ENCODE measurements at regions of chr1 and their contacts with region 1.

Region 1: GRCh38 chr1:20240012-20240411 is 50.7 kb upstream of the VWA5B1 start:
- DNase-seq: no peak
- H3K27ac ChIP-seq: no peak overlapping the region
- CTCF ChIP-seq: no peak

Region 2: GRCh38 chr1:20151906-20152598 is 88.0 kb before region 1 on chr1:
- CTCF ChIA-PET with region 1: no interaction called
- POLR2A ChIA-PET with region 1: no interaction called
- DNase-seq: peak; percentile 82
- H3K27ac ChIP-seq: no peak overlapping the region
- CTCF ChIP-seq: peak; percentile 88

Region 3: DNA sequence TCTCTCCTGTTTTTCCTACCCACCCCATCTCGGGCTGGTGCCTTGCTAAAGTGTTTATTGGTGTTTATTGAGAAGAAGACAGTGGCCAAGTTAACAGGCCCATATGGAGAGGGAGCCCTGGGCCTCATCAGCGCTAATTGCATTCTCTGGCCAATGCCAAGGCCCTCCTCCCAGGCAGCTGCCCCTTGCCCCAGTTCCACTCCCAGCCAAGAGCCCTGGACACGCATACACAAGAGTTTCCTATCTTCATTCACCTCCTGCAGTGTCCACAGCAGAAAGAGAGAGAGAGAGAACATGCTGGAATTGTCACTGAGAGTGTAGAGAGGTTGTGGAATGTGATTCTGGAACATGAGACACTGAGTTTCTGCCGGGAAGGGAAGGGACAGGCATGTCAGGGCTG is 25.2 kb after region 1 on chr1:
- CTCF ChIA-PET with region 1: no interaction called
- POLR2A ChIA-PET with region 1: no interaction called
- DNase-seq: no peak
- H3K27ac ChIP-seq: no peak overlapping the region
- CTCF ChIP-seq: no peak

Region 4: DNA sequence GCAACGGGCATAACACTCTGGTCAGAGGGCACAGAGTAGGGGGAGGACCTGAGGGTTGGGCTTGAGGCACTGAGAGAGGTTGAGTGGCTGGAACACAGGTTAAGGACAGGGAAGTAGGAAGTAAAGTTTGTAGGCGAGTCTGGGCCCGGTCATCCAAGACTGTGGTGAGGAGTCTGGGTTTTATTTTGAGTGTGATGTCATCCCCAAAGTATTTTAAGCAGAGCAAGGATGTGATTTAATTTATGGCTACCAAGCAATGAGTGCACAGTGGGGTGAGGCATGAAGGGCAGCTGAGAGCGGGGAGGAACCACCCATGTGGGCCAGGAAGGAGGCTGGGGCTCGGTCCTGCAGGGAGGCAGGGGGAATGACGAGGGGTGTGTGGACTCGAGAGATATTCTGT is 39.5 kb after region 1 on chr1:
- CTCF ChIA-PET with region 1: no interaction called
- POLR2A ChIA-PET with region 1: no interaction called
- DNase-seq: peak; percentile 71
- H3K27ac ChIP-seq: no peak overlapping the region
- CTCF ChIP-seq: no peak

Region 5: DNA sequence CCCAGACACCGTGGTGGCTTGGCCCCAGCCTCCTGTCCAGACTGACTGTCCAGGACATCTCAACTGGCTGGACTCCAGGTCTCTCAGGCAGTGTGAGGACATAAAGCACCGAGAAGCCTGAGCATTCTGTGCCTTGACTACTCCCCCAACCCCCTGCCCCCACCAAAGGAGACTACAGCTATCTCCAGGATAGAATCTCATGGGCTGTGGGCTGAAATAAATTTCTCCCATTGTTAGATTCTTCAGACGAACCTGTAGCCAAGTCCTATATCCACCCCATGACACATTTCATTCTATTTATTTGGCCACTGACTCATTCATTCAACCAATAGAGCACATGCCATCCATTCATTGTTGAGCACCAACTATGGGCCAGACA is 62.1 kb after region 1 on chr1:
- CTCF ChIA-PET with region 1: interaction called, 10 read pairs
- POLR2A ChIA-PET with region 1: no interaction called
- DNase-seq: no peak
- H3K27ac ChIP-seq: no peak overlapping the region
- CTCF ChIP-seq: no peak

Measured in RWPE1 (cell line).